Activated CD8-positive, alpha-beta T cell treated with anti-CD3 and anti-CD28 coated beads for 36 hours (primary cell): ENCODE measurements at regions of chr14 and their contacts with region 1.

Region 1: DNA sequence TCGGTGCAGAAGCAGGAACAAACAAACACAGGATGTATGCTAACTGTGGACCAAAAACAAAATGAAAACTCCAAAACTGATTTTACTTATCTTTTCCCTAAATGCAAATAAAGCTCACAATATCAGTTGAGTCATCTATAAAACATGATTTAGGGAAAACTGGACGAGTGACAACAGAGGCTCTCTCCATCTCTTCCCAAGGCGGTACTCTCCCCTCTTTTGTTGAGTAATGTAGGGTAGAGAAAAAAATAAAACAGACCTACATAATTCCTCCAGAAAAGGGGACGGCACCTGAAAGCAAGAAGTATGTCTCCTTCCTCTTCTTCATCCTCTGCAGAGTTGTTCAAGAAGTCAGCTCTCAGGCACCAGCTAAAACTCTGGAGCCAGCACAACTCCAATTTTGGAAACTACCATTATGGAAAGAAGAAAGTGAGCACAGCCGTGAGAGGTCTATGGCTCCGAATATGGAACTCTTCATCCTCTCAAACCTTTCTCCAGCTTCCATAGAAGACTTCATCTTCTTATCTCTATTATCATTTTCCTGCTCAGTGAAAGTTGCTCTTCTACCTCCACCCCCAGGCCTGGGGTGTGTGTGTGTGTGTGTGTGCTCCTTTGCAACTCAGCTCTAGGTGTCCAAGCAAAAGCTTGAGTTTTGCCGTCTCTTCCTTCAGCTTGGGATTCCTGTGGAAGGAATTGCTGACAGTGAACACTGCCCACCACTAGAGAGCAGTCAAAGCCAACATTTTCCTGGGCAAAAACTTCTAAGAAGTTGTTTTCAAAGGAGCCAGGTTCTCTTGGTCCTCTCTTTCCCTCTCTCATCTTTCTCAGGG is 155.4 kb downstream of the DIO2 start:
- DNase-seq: peak; percentile 2
- ATAC-seq: no peak
- H3K4me3 Mint-ChIP-seq: no peak overlapping the region
- H3K27ac Mint-ChIP-seq: no peak overlapping the region
- H3K4me1 Mint-ChIP-seq: no peaks in the 10 kb centered on the region
- H3K27me3 Mint-ChIP-seq: no peaks in the 10 kb centered on the region
- CTCF ChIP-seq: peak; percentile 31

Region 2: DNA sequence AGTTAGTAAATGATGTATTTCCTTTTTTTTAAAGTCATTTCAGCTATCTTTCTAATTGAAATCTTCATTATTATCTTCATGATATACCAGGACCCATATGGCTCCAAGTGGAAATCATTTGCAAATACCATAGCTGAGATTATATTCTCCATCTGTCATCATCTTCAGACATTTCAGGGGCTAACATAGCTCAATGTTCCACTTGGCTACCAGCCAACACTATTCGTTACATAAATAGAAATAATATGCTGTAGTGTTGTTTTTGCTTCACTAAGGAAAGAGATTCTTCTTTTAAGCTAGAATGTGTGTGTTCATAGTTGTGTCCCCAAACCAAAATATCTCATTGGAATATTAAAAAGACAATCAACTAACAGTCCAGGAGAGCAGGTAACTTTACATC is 69.6 kb before region 1 on chr14:
- CTCF ChIA-PET with region 1: no interaction called
- POLR2A ChIA-PET with region 1: no interaction called
- intact Hi-C with region 1: no loop called
- DNase-seq: no peak
- ATAC-seq: no peak
- H3K4me3 Mint-ChIP-seq: no peak overlapping the region
- H3K27ac Mint-ChIP-seq: no peak overlapping the region
- H3K4me1 Mint-ChIP-seq: no peaks in the 10 kb centered on the region
- H3K27me3 Mint-ChIP-seq: no peaks in the 10 kb centered on the region
- CTCF ChIP-seq: no peak

Region 3: GRCh38 chr14:80037349-80037748 is 18.5 kb before region 1 on chr14:
- CTCF ChIA-PET with region 1: no interaction called
- POLR2A ChIA-PET with region 1: no interaction called
- intact Hi-C with region 1: no loop called
- DNase-seq: no peak
- ATAC-seq: no peak
- H3K4me3 Mint-ChIP-seq: no peak overlapping the region
- H3K27ac Mint-ChIP-seq: no peak overlapping the region
- H3K4me1 Mint-ChIP-seq: no peaks in the 10 kb centered on the region
- H3K27me3 Mint-ChIP-seq: no peaks in the 10 kb centered on the region
- CTCF ChIP-seq: no peak

Region 4: GRCh38 chr14:80845856-80846255 is 790.0 kb after region 1 on chr14:
- CTCF ChIA-PET with region 1: interaction called, 3 read pairs
- POLR2A ChIA-PET with region 1: no interaction called
- intact Hi-C with region 1: loop called (anchors 10 kb)
- DNase-seq: no peak
- ATAC-seq: no peak
- H3K4me3 Mint-ChIP-seq: no peak overlapping the region
- H3K27ac Mint-ChIP-seq: no peak overlapping the region
- H3K4me1 Mint-ChIP-seq: no peaks in the 10 kb centered on the region
- H3K27me3 Mint-ChIP-seq: no peaks in the 10 kb centered on the region
- CTCF ChIP-seq: no peak